H1 (cell line): ENCODE measurements at regions of chr11 and their contacts with region 1.

Region 1: GRCh38 chr11:47766305-47767227 is 575 bp downstream of the FNBP4 start:
- DNase-seq: no peak
- H3K4me3 ChIP-seq: peak overlapping the region; percentile 87 to 98 (median 94)
- H3K27ac ChIP-seq: peak overlapping the region; percentile 83
- H3K4me1 ChIP-seq: 0 out of 7 replicates have a peak, but pooled peaks cover 0 to 1% (median 0%) of the 10 kb centered on the region in 4 experiments
- H3K27me3 ChIP-seq: no peaks in the 10 kb centered on the region
- CTCF ChIP-seq: no peak
- EP300 ChIP-seq: no peak
- POLR2A ChIP-seq: no peak; a peak in 1 of 3 replicates
- RAD21 ChIP-seq: no peak

Region 2: DNA sequence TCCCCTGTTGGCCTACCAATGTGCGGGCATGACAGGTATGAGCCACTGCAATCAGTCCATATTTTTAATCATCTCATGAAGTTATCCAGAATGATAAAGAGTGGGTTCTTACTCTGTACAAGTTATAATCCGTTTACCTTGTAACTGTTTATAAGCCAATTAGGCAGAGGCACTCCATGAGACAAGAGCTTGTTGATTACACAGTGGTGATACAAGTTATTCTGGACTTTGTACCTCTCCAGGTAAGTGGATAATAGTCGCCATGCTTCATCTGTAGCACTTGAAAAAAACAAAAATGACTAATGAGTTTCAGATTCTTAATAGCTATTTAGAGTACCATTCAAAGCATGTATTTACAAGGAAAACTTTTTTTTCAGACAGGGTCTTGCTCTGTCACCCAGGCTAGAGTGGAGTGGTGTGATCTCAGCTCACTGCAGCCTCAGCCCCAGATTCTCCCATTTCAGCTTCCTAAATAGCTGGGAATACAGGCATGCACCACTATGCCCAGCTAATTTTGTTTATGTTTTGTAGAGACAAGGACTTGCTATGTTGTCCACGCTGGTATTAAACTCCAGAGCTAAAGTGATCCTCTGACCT is 18.3 kb after region 1 on chr11:
- CTCF ChIA-PET with region 1: interaction called, 3 read pairs
- POLR2A ChIA-PET with region 1: interaction called, 16 read pairs
- DNase-seq: no peak
- H3K4me3 ChIP-seq: no peak overlapping the region
- H3K27ac ChIP-seq: no peak overlapping the region
- H3K4me1 ChIP-seq: no peaks in the 10 kb centered on the region
- H3K27me3 ChIP-seq: no peaks in the 10 kb centered on the region
- CTCF ChIP-seq: no peak
- EP300 ChIP-seq: no peak
- POLR2A ChIP-seq: no peak
- RAD21 ChIP-seq: no peak